Ascending aorta (tissue), 2 donors: ENCODE measurements at regions of chr17 and their contacts with region 1.

Region 1: GRCh38 chr17:32486111-32486700 is 587 bp upstream of the CDK5R1 start:
- DNase-seq: peak in 1 of 2 donors; percentile 84
- H3K4me3 ChIP-seq: peak overlapping the region; percentile 75 to 76
- H3K27ac ChIP-seq: peak overlapping the region; percentile 80 to 81
- H3K4me1 ChIP-seq: peaks cover 0 to 27% of the 10 kb centered on the region in 2 donors
- H3K27me3 ChIP-seq: no peaks in the 10 kb centered on the region
- CTCF ChIP-seq: no peak

Region 2: GRCh38 chr17:32659419-32659842 is 173.2 kb after region 1 on chr17:
- intact Hi-C with region 1: loop called (anchors 10 kb)
- DNase-seq: peak; percentile 12 to 85
- H3K4me3 ChIP-seq: no peak overlapping the region
- H3K27ac ChIP-seq: no peak overlapping the region
- H3K4me1 ChIP-seq: peaks cover 0 to 19% of the 10 kb centered on the region in 2 donors
- H3K27me3 ChIP-seq: no peaks in the 10 kb centered on the region
- CTCF ChIP-seq: peak; percentile 77 to 92 (median 90)

Region 3: DNA sequence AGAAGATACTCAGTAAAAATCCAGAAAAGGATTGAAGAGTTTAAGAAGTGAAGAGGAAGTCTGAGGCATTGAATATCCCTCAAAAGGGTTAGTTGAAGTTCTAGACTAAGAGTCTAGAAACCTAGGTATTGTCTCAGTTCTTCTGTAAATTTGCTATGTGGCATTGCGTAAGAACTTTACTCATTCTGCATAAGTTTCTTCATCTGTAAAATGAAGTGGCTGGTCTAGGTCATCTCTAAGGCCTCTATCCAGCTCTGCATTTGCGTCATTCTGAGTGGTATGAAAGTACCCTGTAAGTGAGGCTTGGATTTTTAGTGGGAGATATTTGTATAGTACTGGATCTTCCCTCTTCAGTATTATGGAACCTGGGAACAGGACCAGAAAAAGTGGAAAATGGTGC is 260.5 kb after region 1 on chr17:
- intact Hi-C with region 1: loop called (anchors 5 kb)
- DNase-seq: no peak
- H3K4me3 ChIP-seq: no peak overlapping the region
- H3K27ac ChIP-seq: no peak overlapping the region
- H3K4me1 ChIP-seq: no peaks in the 10 kb centered on the region
- H3K27me3 ChIP-seq: no peaks in the 10 kb centered on the region
- CTCF ChIP-seq: no peak

Region 4: DNA sequence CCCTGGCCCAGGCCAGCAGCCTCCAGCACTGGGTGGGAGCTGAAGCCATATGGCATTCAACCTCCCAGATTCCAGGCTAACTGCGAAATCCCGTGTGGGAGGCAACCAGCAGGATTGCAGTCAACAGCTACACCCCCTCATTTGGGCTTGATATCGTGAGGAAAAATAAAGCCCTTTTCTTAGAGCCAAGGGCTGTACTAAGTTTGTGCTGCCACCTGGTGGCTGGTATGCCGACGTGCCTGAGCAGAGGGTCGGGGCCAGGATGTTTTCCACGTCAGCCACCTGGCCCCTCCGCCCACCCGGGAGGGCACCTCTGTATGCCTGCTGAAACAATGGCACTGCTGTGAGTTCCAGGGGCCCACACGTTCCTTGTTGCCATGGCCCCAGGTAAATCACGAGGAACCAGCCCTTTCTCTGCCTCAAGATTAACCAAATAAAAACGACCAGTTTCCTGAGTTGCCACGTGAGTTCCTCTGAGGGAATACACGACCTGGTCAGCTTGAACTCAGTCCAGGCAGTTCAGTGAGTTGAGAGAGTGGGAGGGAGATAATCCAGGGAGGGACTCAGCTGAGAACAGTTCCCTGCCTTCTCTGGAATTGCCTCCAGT is 450.8 kb after region 1 on chr17:
- intact Hi-C with region 1: loop called (anchors 5 kb)
- DNase-seq: peak in 1 of 2 donors; percentile 86
- H3K4me3 ChIP-seq: no peak overlapping the region
- H3K27ac ChIP-seq: peak overlapping the region; percentile 20 to 63
- H3K4me1 ChIP-seq: peaks cover 0 to 9% of the 10 kb centered on the region in 2 donors
- H3K27me3 ChIP-seq: no peaks in the 10 kb centered on the region
- CTCF ChIP-seq: peak; percentile 76 to 86 (median 85)

Region 5: GRCh38 chr17:32997753-32998632 is 511.8 kb after region 1 on chr17:
- intact Hi-C with region 1: loop called (anchors 10 kb)
- DNase-seq: peak in 1 of 2 donors; percentile 86
- H3K4me3 ChIP-seq: no peak overlapping the region
- H3K27ac ChIP-seq: no peak overlapping the region
- H3K4me1 ChIP-seq: peaks cover 0 to 3% of the 10 kb centered on the region in 2 donors
- H3K27me3 ChIP-seq: no peaks in the 10 kb centered on the region
- CTCF ChIP-seq: peak; percentile 69 to 89 (median 87)